Sigmoid colon (tissue), 7 donors: ENCODE measurements at regions of chr14 and their contacts with region 1.

Region 1: GRCh38 chr14:90301668-90302090 is 30.1 kb downstream of the NRDE2 start:
- DNase-seq: no peak
- H3K4me3 ChIP-seq: no peak overlapping the region
- H3K27ac ChIP-seq: peak overlapping the region; percentile 61 to 75 (median 72)
- H3K4me1 ChIP-seq: peaks cover 0 to 17% (median 16%) of the 10 kb centered on the region in 4 donors
- H3K27me3 ChIP-seq: no peaks in the 10 kb centered on the region
- CTCF ChIP-seq: peak; percentile 34 to 66 (median 46)
- EP300 ChIP-seq: no peak
- POLR2A ChIP-seq: no peak

Region 2: GRCh38 chr14:89564286-89564957 is 737.3 kb before region 1 on chr14:
- intact Hi-C with region 1: no loop called
- DNase-seq: no peak
- H3K4me3 ChIP-seq: no peak overlapping the region
- H3K27ac ChIP-seq: peak overlapping the region in 1 of 4 donors; percentile 22
- H3K4me1 ChIP-seq: no peaks in the 10 kb centered on the region
- H3K27me3 ChIP-seq: no peaks in the 10 kb centered on the region
- CTCF ChIP-seq: no peak
- EP300 ChIP-seq: no peak
- POLR2A ChIP-seq: no peak

Region 3: GRCh38 chr14:90518941-90519256 is 217.2 kb after region 1 on chr14:
- intact Hi-C with region 1: loop called (anchors 10 kb)
- DNase-seq: no peak
- H3K4me3 ChIP-seq: no peak overlapping the region
- H3K27ac ChIP-seq: peak overlapping the region; percentile 70 to 90 (median 80)
- H3K4me1 ChIP-seq: peaks cover 0 to 74% (median 63%) of the 10 kb centered on the region in 4 donors
- H3K27me3 ChIP-seq: no peaks in the 10 kb centered on the region
- CTCF ChIP-seq: peak in 3 of 4 experiments; percentile 14 to 43 (median 30)
- EP300 ChIP-seq: no peak
- POLR2A ChIP-seq: no peak

Region 4: DNA sequence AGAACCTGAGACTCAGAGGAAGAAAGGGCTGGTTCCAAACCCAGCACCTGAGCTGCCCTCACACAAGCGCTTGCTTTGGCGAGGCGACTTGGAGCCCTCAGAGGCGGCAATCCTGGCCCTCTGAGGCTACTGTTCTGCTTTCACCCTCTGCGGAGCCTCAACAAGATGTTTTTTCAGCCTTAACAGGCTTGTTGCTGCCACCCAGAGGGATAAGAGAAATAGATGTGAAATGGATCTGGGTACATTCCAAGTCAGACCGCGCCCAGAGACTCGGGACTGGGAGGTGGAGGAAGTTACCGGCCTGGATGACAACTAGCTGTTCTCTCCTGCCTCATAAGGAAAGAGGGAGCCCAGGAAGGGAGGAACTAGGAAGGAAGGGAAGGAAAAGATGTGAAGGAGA is 425.0 kb after region 1 on chr14:
- intact Hi-C with region 1: loop called (anchors 10 kb)
- DNase-seq: peak; percentile 93
- H3K4me3 ChIP-seq: no peak overlapping the region
- H3K27ac ChIP-seq: peak overlapping the region; percentile 27 to 68 (median 55)
- H3K4me1 ChIP-seq: peaks cover 0 to 28% (median 19%) of the 10 kb centered on the region in 4 donors
- H3K27me3 ChIP-seq: no peaks in the 10 kb centered on the region
- CTCF ChIP-seq: peak in 2 of 4 experiments; percentile 20 to 28
- EP300 ChIP-seq: peak in 1 of 4 donors; percentile 9
- POLR2A ChIP-seq: no peak

Region 5: GRCh38 chr14:90758028-90758889 is 456.6 kb after region 1 on chr14:
- intact Hi-C with region 1: loop called (anchors 1 kb)
- DNase-seq: peak; percentile 95
- H3K4me3 ChIP-seq: peak overlapping the region; percentile 26 to 50 (median 46)
- H3K27ac ChIP-seq: peak overlapping the region; percentile 90 to 96 (median 92)
- H3K4me1 ChIP-seq: peaks cover 0 to 52% (median 36%) of the 10 kb centered on the region in 4 donors
- H3K27me3 ChIP-seq: no peaks in the 10 kb centered on the region
- CTCF ChIP-seq: peak; percentile 75 to 91 (median 85)
- EP300 ChIP-seq: no peak
- POLR2A ChIP-seq: peak in 1 of 2 donors; percentile 35

Region 6: GRCh38 chr14:90815822-90816700 is 514.4 kb after region 1 on chr14 and contains the start of gene TTC7B:
- intact Hi-C with region 1: loop called (anchors 2 kb)
- DNase-seq: peak; percentile 73
- H3K4me3 ChIP-seq: peak within 1 kb of the TSS; percentile 76 to 84 (median 80)
- H3K27ac ChIP-seq: peak within 1 kb of the TSS in 3 of 4 donors; percentile 55 to 66 (median 64)
- H3K4me1 ChIP-seq: peaks cover 0 to 20% (median 17%) of the 10 kb centered on the region in 4 donors
- H3K27me3 ChIP-seq: no peaks in the 10 kb centered on the region
- CTCF ChIP-seq: no peak
- EP300 ChIP-seq: no peak
- POLR2A ChIP-seq: no peak
- total RNA-seq, gene TTC7B: 46.8 to 70.9 (median 61.2) TPM